ENCODE measurements at regions of chr6 and their contacts with region 1.

Region 1: DNA sequence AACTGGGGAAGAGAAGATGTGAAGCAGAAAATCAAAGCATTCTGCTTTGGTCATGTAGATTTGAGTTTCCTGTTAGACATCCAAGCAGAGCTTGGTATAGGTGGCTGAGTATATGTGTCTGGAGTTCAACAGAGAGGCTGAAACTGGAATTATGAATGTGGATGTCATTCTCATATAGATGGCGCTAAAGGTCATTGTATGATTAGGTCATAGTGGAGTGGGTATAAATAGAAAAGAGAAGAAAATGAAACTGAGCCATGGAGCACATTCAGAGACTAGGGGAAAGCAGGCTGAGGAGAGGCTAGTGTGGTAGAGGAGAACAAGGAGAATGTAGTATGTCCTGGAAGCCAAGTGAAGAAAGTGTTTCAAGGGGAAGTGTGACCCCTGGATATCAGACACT is 295.6 kb upstream of the PLN start:
- DNase-seq: no peak
- H3K4me3 ChIP-seq: no peak overlapping the region
- H3K27ac ChIP-seq: no peak overlapping the region
- H3K4me1 ChIP-seq: no peaks in the 10 kb centered on the region
- H3K27me3 ChIP-seq: no peaks in the 10 kb centered on the region
- CTCF ChIP-seq: no peak

Region 2: DNA sequence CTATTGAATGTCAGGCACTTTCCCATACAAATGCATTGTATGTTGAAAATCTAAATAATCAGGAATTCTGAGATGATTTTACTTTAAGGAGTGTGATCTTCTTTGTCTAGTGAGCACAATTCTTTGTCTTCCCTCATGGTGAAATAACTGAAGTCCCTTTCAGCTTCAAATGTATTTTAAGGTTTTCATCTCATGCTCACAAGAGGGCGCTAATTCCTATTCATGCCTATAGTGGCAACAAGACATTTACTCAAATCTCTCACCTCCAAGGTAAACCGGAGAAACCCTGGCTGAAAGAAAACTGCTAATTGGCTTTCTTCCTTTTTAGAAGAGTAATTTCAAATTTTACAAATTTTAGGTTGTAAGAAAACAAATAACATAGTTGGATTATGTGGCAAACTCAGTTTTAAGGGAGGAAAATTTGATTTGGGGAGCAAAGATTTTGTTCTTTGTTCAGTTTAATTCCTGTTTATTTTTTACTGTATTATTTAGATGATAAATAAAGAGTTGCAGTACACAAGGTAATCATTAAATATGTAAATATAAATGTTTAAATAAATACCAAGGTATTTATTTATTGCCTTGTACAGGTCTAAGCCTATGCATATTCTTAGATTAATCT is 276.3 kb before region 1 on chr6:
- intact Hi-C with region 1: loop called (anchors 5 kb)
- DNase-seq: no peak
- H3K4me3 ChIP-seq: no peak overlapping the region
- H3K27ac ChIP-seq: no peak overlapping the region
- H3K4me1 ChIP-seq: peaks cover 4% of the 10 kb centered on the region
- H3K27me3 ChIP-seq: no peaks in the 10 kb centered on the region
- CTCF ChIP-seq: peak; percentile 73

Region 3: GRCh38 chr6:118748311-118749062 is 496.0 kb after region 1 on chr6:
- intact Hi-C with region 1: no loop called
- DNase-seq: no peak
- H3K4me3 ChIP-seq: no peak overlapping the region
- H3K27ac ChIP-seq: no peak overlapping the region
- H3K4me1 ChIP-seq: peaks cover 24% of the 10 kb centered on the region
- H3K27me3 ChIP-seq: no peaks in the 10 kb centered on the region
- CTCF ChIP-seq: no peak

Region 4: GRCh38 chr6:119284861-119285521 is 1032.5 kb after region 1 on chr6:
- intact Hi-C with region 1: no loop called
- DNase-seq: no peak
- H3K4me3 ChIP-seq: no peak overlapping the region
- H3K27ac ChIP-seq: no peak overlapping the region
- H3K4me1 ChIP-seq: peaks cover 6% of the 10 kb centered on the region
- H3K27me3 ChIP-seq: no peaks in the 10 kb centered on the region
- CTCF ChIP-seq: peak; percentile 11

Measured in left ventricle myocardium inferior (tissue), 1 donor.